ENCODE measurements at regions of chr1 and their contacts with region 1.

Region 1: DNA sequence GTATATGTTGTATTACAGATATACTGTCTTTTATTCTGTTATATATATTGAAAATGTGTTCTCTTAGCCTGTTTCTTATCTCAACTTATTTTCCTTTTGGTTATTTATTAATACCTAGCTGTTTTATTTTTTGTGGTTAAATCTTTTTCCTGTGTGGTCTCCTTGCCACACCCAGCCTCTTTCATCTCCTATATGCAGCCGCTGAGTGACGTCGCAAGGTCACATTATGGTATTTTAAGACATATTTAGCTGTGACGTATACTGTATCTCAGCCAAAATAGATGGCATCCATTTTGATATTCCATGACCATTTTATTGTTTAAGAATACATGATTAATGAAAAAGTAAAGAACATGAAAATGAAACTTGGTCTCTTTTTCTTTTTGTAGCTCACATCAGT is 29.1 kb downstream of the CENPF start:
- DNase-seq: peak in 7 of 9 donors; percentile 48 to 79 (median 71)
- ATAC-seq: peak; percentile 78
- H3K4me3 ChIP-seq: no peak overlapping the region
- H3K4me3 Mint-ChIP-seq: peak overlapping the region in 9 of 10 donors; percentile 13 to 80 (median 62)
- H3K27ac ChIP-seq: no peak overlapping the region
- H3K27ac Mint-ChIP-seq: peak overlapping the region; percentile 56 to 96 (median 87)
- H3K4me1 ChIP-seq: peaks cover 6 to 15% of the 10 kb centered on the region in 2 donors
- H3K4me1 Mint-ChIP-seq: peaks cover 8 to 47% (median 27%) of the 10 kb centered on the region in 7 donors
- H3K27me3 ChIP-seq: no peaks in the 10 kb centered on the region
- H3K27me3 Mint-ChIP-seq: no peaks in the 10 kb centered on the region

Region 2: DNA sequence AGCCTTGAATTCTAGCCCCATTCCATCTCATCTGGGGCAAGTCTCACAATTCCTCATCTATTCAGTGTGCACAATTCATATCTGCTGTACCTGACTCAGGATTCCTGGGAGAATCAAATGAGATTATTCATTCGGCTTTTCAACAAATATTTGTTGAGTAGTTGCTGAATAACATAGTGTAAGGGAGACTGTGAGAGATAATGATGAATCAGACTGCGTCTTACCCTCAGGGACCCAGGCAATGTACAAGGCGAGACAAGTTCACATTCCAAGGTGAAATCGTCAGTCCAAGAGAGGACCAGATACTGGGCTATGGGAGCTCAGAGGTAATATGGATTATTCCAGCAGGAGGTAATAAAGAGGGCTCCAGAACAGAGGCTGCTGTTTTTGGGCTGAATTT is 419.0 kb before region 1 on chr1:
- CTCF ChIA-PET with region 1: interaction called, 3 read pairs
- POLR2A ChIA-PET with region 1: no interaction called
- intact Hi-C with region 1: loop called (anchors 2 to 5 kb)
- DNase-seq: no peak
- ATAC-seq: no peak
- H3K4me3 ChIP-seq: no peak overlapping the region
- H3K4me3 Mint-ChIP-seq: no peak overlapping the region
- H3K27ac ChIP-seq: no peak overlapping the region
- H3K27ac Mint-ChIP-seq: no peak overlapping the region
- H3K4me1 ChIP-seq: no peaks in the 10 kb centered on the region
- H3K4me1 Mint-ChIP-seq: peaks cover 0 to 10% (median 5%) of the 10 kb centered on the region in 7 donors
- H3K27me3 ChIP-seq: no peaks in the 10 kb centered on the region
- H3K27me3 Mint-ChIP-seq: peaks cover 7 to 38% (median 13%) of the 10 kb centered on the region in 5 donors

Region 3: GRCh38 chr1:214602764-214603657 is 29.1 kb before region 1 on chr1 and contains the start of gene CENPF:
- CTCF ChIA-PET with region 1: interaction called, 3 read pairs
- POLR2A ChIA-PET with region 1: no interaction called
- intact Hi-C with region 1: loop called in 1 of 2 experiments (anchors 2 kb)
- DNase-seq: peak; percentile 79 to 96 (median 94)
- ATAC-seq: peak; percentile 99
- H3K4me3 ChIP-seq: peak within 1 kb of the TSS; percentile 60
- H3K4me3 Mint-ChIP-seq: peak within 1 kb of the TSS; percentile 86 to 97 (median 92)
- H3K27ac ChIP-seq: peak within 1 kb of the TSS; percentile 48
- H3K27ac Mint-ChIP-seq: peak within 1 kb of the TSS; percentile 52 to 98 (median 87)
- H3K4me1 ChIP-seq: peaks cover 0 to 6% of the 10 kb centered on the region in 2 donors
- H3K4me1 Mint-ChIP-seq: peaks cover 6 to 29% (median 24%) of the 10 kb centered on the region in 7 donors
- H3K27me3 ChIP-seq: no peaks in the 10 kb centered on the region
- H3K27me3 Mint-ChIP-seq: peaks cover 0 to 2% (median 0%) of the 10 kb centered on the region in 5 donors
- total RNA-seq, gene CENPF: 2.1 to 79.9 (median 4.1) TPM

Region 4: GRCh38 chr1:214645712-214646111 is 13.6 kb after region 1 on chr1:
- CTCF ChIA-PET with region 1: interaction called, 10 read pairs
- POLR2A ChIA-PET with region 1: interaction called, 4 read pairs
- intact Hi-C with region 1: loop called (anchors 1 to 2 kb)
- DNase-seq: no peak
- ATAC-seq: no peak
- H3K4me3 ChIP-seq: no peak overlapping the region
- H3K4me3 Mint-ChIP-seq: peak overlapping the region in 8 of 10 donors; percentile 18 to 76 (median 50)
- H3K27ac ChIP-seq: no peak overlapping the region
- H3K27ac Mint-ChIP-seq: peak overlapping the region; percentile 14 to 94 (median 67)
- H3K4me1 ChIP-seq: peaks cover 0 to 22% of the 10 kb centered on the region in 2 donors
- H3K4me1 Mint-ChIP-seq: peaks cover 0 to 42% (median 19%) of the 10 kb centered on the region in 7 donors
- H3K27me3 ChIP-seq: no peaks in the 10 kb centered on the region
- H3K27me3 Mint-ChIP-seq: no peaks in the 10 kb centered on the region

Region 5: DNA sequence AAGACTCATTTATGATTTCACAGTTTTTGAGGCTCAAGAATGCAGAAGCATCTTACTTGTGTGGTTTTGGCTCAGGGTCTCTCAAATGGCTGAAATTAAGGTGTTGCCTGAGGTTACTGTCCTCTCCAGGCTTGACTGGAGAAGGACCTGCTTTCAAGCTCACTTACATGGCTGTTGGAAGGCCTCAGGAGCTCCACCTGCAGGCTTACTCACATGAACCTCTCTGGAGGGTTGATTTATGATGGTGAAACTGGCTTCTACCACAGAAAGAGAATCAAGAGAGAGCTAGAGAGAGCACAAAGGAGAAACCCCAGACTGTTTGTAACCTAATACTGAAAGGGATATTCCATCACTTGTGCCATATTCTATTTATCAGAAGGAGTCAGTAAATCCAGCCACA is 444.2 kb after region 1 on chr1:
- CTCF ChIA-PET with region 1: no interaction called
- POLR2A ChIA-PET with region 1: no interaction called
- intact Hi-C with region 1: loop called (anchors 1 to 5 kb)
- DNase-seq: no peak
- ATAC-seq: no peak
- H3K4me3 ChIP-seq: no peak overlapping the region
- H3K4me3 Mint-ChIP-seq: no peak overlapping the region
- H3K27ac ChIP-seq: no peak overlapping the region
- H3K27ac Mint-ChIP-seq: no peak overlapping the region
- H3K4me1 ChIP-seq: no peaks in the 10 kb centered on the region
- H3K4me1 Mint-ChIP-seq: peaks cover 0 to 7% (median 3%) of the 10 kb centered on the region in 7 donors
- H3K27me3 ChIP-seq: no peaks in the 10 kb centered on the region
- H3K27me3 Mint-ChIP-seq: peaks cover 23 to 48% (median 31%) of the 10 kb centered on the region in 5 donors

Region 6: DNA sequence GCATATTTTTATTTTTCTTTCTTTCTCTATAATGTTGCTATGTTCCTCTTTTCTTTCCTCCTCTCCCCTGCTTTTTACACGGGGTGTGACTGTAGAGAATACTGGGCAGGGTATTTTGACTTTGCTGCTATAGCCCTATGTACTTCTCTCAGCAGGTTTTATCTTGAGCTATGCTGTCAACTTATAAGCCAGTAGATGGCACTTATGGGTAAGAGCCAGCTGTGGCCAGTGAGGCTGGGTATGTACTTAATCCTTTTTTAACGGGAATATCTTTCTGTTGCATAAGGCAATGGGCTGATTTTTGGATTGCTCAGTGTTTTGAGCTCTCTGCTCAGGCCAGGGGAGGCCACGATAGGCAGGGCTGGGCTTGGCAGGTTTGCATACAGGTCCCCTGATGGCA is 549.4 kb after region 1 on chr1:
- CTCF ChIA-PET with region 1: no interaction called
- POLR2A ChIA-PET with region 1: no interaction called
- intact Hi-C with region 1: no loop called
- DNase-seq: no peak
- ATAC-seq: no peak
- H3K4me3 ChIP-seq: no peak overlapping the region
- H3K4me3 Mint-ChIP-seq: no peak overlapping the region
- H3K27ac ChIP-seq: no peak overlapping the region
- H3K27ac Mint-ChIP-seq: no peak overlapping the region
- H3K4me1 ChIP-seq: no peaks in the 10 kb centered on the region
- H3K4me1 Mint-ChIP-seq: no peaks in the 10 kb centered on the region
- H3K27me3 ChIP-seq: no peaks in the 10 kb centered on the region
- H3K27me3 Mint-ChIP-seq: peaks cover 0 to 27% (median 21%) of the 10 kb centered on the region in 5 donors

Region 7: DNA sequence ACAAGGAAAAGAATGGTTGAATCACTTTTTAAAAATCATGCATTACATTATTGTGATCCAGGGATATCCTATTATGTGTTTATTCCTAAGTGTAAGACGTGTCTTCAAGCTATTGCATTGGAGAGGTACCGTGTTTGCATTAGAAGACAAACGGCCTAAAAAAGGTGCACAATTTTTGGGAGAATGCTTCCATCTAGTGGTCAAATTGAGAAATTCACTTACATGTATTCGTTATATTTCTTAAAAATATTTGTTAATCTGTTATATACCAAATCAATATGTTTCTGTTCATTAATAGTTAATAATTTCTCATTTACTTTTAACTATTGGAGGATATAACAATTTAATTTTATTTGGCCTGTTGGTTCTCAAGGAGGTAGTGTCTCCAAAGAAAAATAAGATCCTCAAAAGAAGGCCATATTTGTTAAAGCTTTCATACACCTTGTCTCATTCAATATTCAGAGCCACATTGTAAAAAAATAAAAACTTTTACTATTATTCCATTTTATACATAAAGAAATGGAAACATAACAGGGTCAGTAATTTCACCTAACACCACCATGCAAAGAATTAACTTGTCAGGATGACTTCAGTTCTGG is 894.6 kb after region 1 on chr1:
- CTCF ChIA-PET with region 1: interaction called, 7 read pairs
- POLR2A ChIA-PET with region 1: no interaction called
- intact Hi-C with region 1: loop called (anchors 1 kb)
- DNase-seq: peak in 7 of 9 donors; percentile 16 to 56 (median 47)
- ATAC-seq: peak; percentile 52
- H3K4me3 ChIP-seq: no peak overlapping the region
- H3K4me3 Mint-ChIP-seq: no peak overlapping the region
- H3K27ac ChIP-seq: no peak overlapping the region
- H3K27ac Mint-ChIP-seq: no peak overlapping the region
- H3K4me1 ChIP-seq: no peaks in the 10 kb centered on the region
- H3K4me1 Mint-ChIP-seq: peaks cover 0 to 3% (median 0%) of the 10 kb centered on the region in 7 donors
- H3K27me3 ChIP-seq: no peaks in the 10 kb centered on the region
- H3K27me3 Mint-ChIP-seq: peaks cover 6 to 20% (median 12%) of the 10 kb centered on the region in 5 donors

Measured in naive thymus-derived CD4-positive, alpha-beta T cell (primary cell).